ENCODE measurements at regions of chr4 and their contacts with region 1.

Region 1: GRCh38 chr4:77959566-77960338 is 97.1 kb downstream of the MRPL1 start:
- DNase-seq: no peak
- ATAC-seq: peak; percentile 56
- H3K4me3 ChIP-seq: peak overlapping the region; percentile 3 to 26
- H3K27ac ChIP-seq: no peak overlapping the region
- H3K4me1 ChIP-seq: no peaks in the 10 kb centered on the region
- H3K27me3 ChIP-seq: no peaks in the 10 kb centered on the region

Region 2: GRCh38 chr4:78002261-78002660 is 42.5 kb after region 1 on chr4:
- intact Hi-C with region 1: no loop called
- DNase-seq: no peak
- ATAC-seq: no peak
- H3K4me3 ChIP-seq: no peak overlapping the region
- H3K27ac ChIP-seq: no peak overlapping the region
- H3K4me1 ChIP-seq: no peaks in the 10 kb centered on the region
- H3K27me3 ChIP-seq: no peaks in the 10 kb centered on the region

Region 3: DNA sequence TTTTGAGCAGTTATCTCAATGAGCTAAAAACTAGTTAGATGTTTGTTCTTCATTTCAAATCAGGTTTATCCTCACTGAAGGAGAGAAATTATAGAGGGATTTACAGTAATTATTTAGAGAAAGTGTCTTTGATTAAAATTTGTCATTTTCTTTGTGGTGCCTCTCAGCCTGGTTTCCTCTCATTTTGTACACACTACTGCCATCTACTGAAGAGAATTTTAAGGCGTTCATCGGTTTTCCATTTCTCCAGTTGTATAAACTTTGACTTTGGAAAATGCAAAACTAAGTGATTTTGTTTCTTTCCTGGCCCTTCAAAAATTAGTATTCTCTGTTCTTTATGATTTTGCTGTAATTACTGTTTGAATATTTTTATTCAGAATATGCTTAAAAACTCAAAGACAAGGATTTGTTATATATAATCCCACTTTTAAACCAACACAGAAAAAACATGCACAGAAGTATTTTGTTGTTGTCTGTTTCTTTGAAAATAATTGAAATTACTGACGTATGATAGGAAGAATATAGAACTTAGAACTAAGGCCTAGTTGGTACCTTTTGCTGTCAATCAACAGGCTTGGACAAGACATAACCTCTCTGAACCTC is 557.4 kb after region 1 on chr4:
- intact Hi-C with region 1: loop called (anchors 10 kb)
- DNase-seq: no peak
- ATAC-seq: no peak
- H3K4me3 ChIP-seq: no peak overlapping the region
- H3K27ac ChIP-seq: no peak overlapping the region
- H3K4me1 ChIP-seq: no peaks in the 10 kb centered on the region
- H3K27me3 ChIP-seq: no peaks in the 10 kb centered on the region

Region 4: DNA sequence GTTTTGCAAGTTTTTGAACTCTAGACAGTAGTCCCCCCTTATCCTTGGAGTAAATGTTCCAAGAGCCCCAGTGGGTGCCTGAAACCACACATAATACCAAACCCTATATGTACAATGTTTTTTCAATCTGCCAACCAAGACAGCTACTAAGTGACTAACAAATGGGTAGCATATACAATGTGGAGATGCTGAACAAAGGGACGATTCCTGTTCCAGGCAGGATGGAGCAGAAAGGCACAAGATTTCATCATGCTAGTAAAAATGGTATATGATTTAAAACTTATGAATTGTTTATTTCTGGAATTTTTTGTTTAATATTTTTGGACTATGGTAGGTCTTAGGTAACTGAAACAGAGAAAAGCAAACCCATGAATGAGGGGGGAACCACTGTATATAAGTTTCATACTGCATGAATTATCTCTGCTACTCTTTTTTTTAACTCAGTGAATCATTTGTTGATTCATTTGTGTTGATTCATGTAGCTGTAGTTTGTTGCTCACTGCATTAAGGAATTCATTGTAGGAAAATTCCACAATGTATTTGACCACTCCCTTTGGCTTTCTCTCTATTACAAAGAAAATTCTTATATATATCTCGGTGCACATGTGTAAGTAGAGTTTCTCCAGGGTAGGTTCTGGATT is 569.9 kb after region 1 on chr4:
- intact Hi-C with region 1: loop called in 1 of 2 experiments (anchors 10 kb)
- DNase-seq: no peak
- ATAC-seq: no peak
- H3K4me3 ChIP-seq: no peak overlapping the region
- H3K27ac ChIP-seq: no peak overlapping the region
- H3K4me1 ChIP-seq: no peaks in the 10 kb centered on the region
- H3K27me3 ChIP-seq: no peaks in the 10 kb centered on the region

Measured in aorta (tissue), 5 donors.